A549 (cell line): ENCODE measurements at regions of chr7 and their contacts with region 1.

Region 1: GRCh38 chr7:134562136-134562535 is 13.2 kb downstream of the AKR1B15 start:
- DNase-seq: peak in 1 of 2 experiments; percentile 52
- ATAC-seq: peak in 1 of 2 experiments; percentile 47; a peak in 3 of 6 replicates
- H3K4me3 ChIP-seq: peak overlapping the region; percentile 16; the same call in 1 of the 3 replicates
- H3K27ac ChIP-seq: peak overlapping the region; percentile 91 to 96
- H3K4me1 ChIP-seq: peaks cover 22% of the 10 kb centered on the region
- CTCF ChIP-seq: no peak
- EP300 ChIP-seq: no peak
- POLR2A ChIP-seq: no peak
- RAD21 ChIP-seq: no peak

Region 2: GRCh38 chr7:134502463-134503371 is 59.4 kb before region 1 on chr7:
- CTCF ChIA-PET with region 1: no interaction called
- POLR2A ChIA-PET with region 1: no interaction called
- DNase-seq: no peak
- ATAC-seq: no peak
- H3K4me3 ChIP-seq: no peak overlapping the region
- H3K27ac ChIP-seq: peak overlapping the region in 1 of 2 experiments; percentile 55; a peak in 3 of 6 replicates
- H3K4me1 ChIP-seq: 0 out of 3 replicates have a peak, but pooled peaks cover 9% of the 10 kb centered on the region
- CTCF ChIP-seq: no peak
- EP300 ChIP-seq: no peak
- POLR2A ChIP-seq: no peak
- RAD21 ChIP-seq: no peak

Region 3: DNA sequence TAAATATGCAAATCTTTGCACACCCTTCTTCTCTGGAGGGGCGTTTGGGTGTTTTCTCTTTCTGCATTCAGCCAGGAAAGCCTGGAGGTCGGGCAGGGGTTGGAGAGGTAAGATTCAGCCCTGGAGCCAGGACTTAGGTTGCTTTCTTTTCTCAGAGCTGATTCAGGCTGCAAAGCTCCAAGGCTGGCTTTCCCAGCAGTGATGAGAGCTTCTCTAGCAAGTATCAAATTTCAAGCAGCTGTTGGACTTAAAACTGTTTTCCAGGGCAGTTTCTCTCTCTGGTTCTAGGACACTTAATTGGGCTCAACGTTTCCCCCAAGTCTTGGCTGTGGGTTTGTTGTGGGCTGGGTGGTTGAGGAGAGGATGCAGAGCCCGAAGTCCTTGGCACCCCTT is 34.2 kb before region 1 on chr7:
- CTCF ChIA-PET with region 1: interaction called, 914 read pairs
- POLR2A ChIA-PET with region 1: interaction called, 30 read pairs
- DNase-seq: no peak
- ATAC-seq: peak in 1 of 2 experiments; percentile 9; a peak in 4 of 6 replicates
- H3K4me3 ChIP-seq: peak overlapping the region; percentile 84
- H3K27ac ChIP-seq: peak overlapping the region; percentile 91 to 98
- H3K4me1 ChIP-seq: peaks cover 54% of the 10 kb centered on the region
- CTCF ChIP-seq: no peak
- EP300 ChIP-seq: no peak
- POLR2A ChIP-seq: no peak; the same call in 1 of the 2 replicates
- RAD21 ChIP-seq: no peak